Tibial artery (tissue), 4 donors: ENCODE measurements at regions of chr17 and their contacts with region 1.

Region 1: DNA sequence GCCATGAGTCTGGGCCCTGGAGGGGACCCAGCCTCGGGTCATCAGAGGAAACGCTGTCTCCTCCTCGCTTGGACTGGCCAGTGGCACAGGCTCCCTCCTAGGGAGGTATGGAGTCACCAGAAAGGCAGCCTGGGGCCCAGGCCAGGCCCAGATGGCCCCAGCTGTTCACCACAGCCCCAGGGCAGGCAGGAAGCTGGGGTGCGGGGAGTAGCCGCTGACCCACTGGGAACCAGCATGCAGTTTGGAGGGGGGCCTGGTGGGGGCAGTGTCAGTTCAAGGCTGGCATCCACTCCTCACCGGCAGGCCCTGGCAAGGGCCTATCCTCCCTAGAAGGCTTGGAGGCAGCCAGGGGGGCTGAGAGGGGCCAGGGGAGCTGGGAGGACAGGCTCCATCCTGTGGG is 48.8 kb downstream of the SDK2 start:
- DNase-seq: no peak
- H3K4me3 ChIP-seq: no peak overlapping the region
- H3K27ac ChIP-seq: no peak overlapping the region
- H3K4me1 ChIP-seq: no peaks in the 10 kb centered on the region
- H3K27me3 ChIP-seq: peaks cover 0 to 23% of the 10 kb centered on the region in 2 donors
- CTCF ChIP-seq: peak; percentile 13 to 18

Region 2: GRCh38 chr17:73710095-73710592 is 114.7 kb after region 1 on chr17:
- intact Hi-C with region 1: loop called (anchors 10 kb)
- DNase-seq: peak in 1 of 2 donors; percentile 34
- H3K4me3 ChIP-seq: no peak overlapping the region
- H3K27ac ChIP-seq: no peak overlapping the region
- H3K4me1 ChIP-seq: no peaks in the 10 kb centered on the region
- H3K27me3 ChIP-seq: peaks cover 0 to 60% of the 10 kb centered on the region in 2 donors
- CTCF ChIP-seq: peak; percentile 52 to 63